ENCODE measurements at regions of chr3 and their contacts with region 1.

Region 1: DNA sequence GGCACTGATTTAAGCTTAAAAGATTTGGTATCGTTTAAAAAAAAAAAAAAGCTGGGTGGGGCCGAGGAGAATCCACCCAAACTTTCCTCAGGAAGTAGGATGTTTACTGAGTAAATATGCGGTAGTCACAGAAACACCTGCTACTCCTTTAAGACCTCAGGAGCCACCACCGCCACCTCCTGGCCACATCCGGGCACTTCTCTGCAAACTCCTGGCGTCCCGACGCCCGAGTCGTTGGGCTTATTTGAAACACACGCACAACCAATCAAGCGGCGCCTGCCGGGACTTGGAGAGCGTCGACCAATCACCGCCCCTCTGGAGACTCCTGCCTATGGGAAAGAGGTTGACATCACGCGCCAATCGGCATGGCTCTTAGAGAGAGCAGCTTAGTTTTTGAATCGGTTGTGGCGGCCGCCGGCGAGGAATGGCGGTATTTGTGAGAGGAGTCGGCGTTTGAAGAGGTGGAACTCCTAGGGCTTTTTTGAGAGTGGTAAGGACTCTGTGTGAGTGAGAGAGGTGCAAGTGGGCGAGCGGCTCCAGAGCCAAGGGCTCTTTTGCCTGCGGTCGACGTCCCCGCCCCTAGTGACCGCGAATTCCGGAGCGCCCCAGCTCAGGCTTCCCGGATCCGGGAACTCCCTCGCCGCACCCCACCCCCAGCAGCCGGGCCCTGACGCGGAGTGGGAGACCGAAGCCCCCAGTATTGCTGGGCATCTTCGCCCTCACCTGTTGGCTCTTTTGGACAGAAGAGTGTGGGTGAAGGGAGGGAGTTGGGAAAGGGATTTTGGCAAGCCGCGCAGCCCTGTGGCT is at the start of gene ECT2:
- DNase-seq: peak; percentile 99
- H3K4me3 ChIP-seq: peak within 1 kb of the TSS; percentile 91
- H3K27ac ChIP-seq: peak within 1 kb of the TSS; percentile 97
- H3K27me3 ChIP-seq: no peaks in the 10 kb centered on the region
- CTCF ChIP-seq: peak; percentile 72
- polyA plus RNA-seq, gene ECT2: 14.0 and 21.8 TPM in 2 replicates

Region 2: DNA sequence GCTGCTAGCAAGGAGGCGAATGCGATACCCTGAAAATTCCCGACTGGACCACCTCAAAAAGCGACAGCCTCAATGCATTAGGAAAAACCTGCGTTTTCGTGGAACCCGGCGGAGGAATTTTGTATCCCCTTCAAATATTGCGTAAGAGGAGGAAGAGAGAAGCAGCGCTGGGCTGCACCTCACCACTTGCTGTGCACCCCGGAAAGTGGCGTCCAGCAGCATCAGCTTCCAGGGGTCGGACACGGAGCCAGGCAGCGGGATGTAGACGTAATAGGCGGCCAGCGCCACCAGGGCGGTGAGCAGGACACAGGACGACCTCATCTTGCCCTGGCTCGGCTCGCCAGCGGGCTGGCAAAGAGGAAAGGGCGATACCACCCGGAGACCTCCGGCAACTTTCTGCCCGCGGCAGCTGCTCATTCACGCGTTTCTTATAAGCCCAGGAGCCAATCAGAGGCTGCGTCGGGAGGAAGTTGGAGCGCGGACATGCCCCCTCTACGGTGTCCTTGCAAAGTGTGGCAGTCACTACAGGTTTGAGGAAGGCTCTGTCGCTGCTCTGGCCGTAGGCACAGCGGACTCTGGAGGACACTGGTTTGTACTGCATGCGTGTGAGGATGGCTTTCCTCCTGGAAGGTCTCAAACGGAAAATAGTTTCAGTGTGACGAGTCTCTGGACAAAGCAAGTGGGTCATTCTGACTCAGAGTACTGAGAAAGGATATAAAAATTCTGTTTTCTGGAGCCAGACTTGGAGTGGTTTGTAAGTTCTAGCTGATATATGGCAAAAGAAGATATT is 39.7 kb before region 1 on chr3 and contains the start of gene NCEH1:
- CTCF ChIA-PET with region 1: interaction called, 9 read pairs
- POLR2A ChIA-PET with region 1: interaction called, 11 read pairs
- DNase-seq: peak; percentile 91
- H3K4me3 ChIP-seq: peak within 1 kb of the TSS; percentile 95
- H3K27ac ChIP-seq: peak within 1 kb of the TSS; percentile 89
- H3K27me3 ChIP-seq: no peaks in the 10 kb centered on the region
- CTCF ChIP-seq: peak; percentile 69
- polyA plus RNA-seq, gene NCEH1: 11.9 and 14.6 TPM in 2 replicates

Region 3: DNA sequence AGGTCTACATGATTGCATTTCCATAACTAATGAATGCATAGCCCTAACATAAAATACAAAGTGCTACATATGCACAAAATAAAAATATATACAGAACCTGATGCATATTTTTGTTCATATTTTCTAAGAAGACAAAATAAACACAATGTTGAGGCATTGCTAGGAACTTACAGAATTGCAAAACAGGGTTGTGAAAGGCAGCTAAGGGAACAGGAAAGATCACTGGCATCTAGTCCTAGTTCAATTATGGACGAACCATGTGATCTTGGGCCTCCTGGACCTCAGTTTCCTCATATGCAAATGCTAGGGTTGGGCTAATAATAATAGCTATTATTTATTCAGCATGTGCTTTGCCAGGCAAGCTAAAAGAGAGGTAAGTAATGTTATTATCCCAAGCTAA is 24.2 kb before region 1 on chr3:
- CTCF ChIA-PET with region 1: interaction called, 12 read pairs
- POLR2A ChIA-PET with region 1: no interaction called
- DNase-seq: no peak
- H3K4me3 ChIP-seq: no peak overlapping the region
- H3K27ac ChIP-seq: no peak overlapping the region
- H3K27me3 ChIP-seq: no peaks in the 10 kb centered on the region
- CTCF ChIP-seq: no peak

Region 4: DNA sequence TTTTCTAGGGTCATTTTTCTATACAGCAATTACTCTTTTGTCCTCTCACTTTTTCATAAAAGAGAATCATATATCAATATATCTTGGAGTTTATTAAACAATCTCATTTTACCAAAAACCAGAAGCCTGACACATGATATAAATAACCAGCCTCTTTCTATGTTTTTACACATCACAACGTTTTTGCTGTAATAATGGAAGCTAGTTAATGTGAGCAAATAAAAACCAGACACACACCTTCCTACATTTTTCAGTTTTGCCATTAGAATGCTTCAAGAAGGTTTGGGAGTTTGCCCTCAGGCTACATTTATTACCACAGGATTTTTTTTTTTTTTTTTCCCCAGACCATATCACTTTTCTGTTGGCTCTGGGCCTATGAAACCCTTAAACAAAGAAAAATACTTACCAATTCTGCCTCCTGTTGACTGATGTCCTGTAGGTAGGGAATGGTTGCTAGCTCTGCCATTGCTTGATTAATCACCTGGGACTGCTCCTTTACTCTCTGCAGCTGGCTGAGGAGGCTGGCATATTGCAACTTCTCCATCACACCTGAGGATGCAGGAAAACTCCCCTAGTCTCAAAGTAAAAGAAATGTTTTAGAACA is 165.4 kb after region 1 on chr3:
- CTCF ChIA-PET with region 1: no interaction called
- POLR2A ChIA-PET with region 1: no interaction called
- DNase-seq: no peak
- H3K4me3 ChIP-seq: no peak overlapping the region
- H3K27ac ChIP-seq: no peak overlapping the region
- H3K27me3 ChIP-seq: no peaks in the 10 kb centered on the region
- CTCF ChIP-seq: no peak

Measured in AG04450 (cell line).